ENCODE measurements at regions of chr6 and their contacts with region 1.

Region 1: GRCh38 chr6:34196126-34196830 is 40.4 kb upstream of the HMGA1 start:
- DNase-seq: peak; percentile 88
- H3K4me3 Mint-ChIP-seq: peak overlapping the region; percentile 73
- H3K27ac Mint-ChIP-seq: peak overlapping the region; percentile 78
- H3K4me1 Mint-ChIP-seq: peaks cover 10% of the 10 kb centered on the region
- H3K27me3 Mint-ChIP-seq: peaks cover 2% of the 10 kb centered on the region

Region 2: DNA sequence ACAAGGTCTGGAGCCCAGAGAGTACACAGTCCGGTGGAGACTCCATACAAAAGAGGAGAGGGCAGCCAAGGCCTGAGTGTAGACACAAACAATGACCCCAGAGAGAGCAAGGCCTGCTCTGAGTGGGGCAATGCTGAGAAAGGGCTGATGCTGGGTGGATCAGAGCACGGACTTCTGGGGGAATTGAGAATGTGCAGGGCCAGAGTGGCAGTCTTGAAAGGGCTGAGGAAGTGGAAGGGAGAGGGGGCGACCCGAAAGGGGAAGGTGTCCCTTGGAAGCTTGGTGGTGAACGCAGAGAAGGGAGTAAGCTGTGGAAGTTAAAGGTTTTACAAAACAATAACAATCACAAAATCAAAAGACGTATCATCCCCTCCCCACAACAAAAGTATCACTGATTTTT is 38.4 kb before region 1 on chr6:
- CTCF ChIA-PET with region 1: interaction called, 16 read pairs
- POLR2A ChIA-PET with region 1: no interaction called
- DNase-seq: no peak
- H3K4me3 Mint-ChIP-seq: no peak overlapping the region
- H3K27ac Mint-ChIP-seq: no peak overlapping the region
- H3K4me1 Mint-ChIP-seq: no peaks in the 10 kb centered on the region
- H3K27me3 Mint-ChIP-seq: peaks cover 28% of the 10 kb centered on the region

Region 3: DNA sequence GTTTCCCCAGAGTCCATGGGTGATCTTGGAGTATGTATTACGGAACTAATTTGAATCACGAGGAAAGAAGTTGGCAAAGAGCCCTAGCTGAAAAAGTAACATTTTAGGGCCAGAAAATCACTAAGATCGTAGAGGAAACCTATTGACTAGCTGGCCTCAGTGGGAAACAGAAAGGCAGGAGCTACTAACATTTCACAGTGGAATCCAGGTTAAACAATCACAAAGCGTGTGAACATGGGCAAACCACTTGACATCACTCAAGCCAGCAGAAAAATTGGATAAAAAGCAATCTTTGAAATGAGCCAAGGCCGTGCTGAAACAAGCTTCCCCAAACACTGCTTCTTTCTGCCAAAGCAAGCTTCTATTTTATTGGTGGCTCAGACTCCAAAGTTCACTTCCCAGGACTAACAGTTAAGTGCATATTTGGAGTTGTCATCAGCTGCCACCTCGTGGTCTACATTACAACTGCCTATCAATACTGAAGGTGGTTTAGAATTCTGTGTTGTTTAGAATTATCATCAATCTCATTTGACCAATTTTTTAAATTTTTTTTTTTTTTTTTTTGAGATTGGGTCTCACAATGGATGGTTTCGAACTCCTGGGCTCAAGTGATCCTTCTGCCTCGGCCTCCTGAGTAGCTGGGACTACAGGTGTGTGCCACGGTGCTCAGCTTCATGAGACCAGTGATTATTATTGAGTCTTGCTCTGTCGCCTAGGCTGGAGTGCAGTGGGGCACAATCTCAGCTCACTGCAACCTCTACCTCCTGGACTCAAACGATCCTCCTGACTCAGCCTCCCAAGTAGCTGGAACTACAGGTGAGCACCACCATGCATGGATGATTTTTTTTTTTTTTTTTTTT is 219.0 kb after region 1 on chr6:
- CTCF ChIA-PET with region 1: interaction called, 35 read pairs
- POLR2A ChIA-PET with region 1: no interaction called
- DNase-seq: peak; percentile 54
- H3K4me3 Mint-ChIP-seq: no peak overlapping the region
- H3K27ac Mint-ChIP-seq: peak overlapping the region; percentile 19
- H3K4me1 Mint-ChIP-seq: peaks cover 4% of the 10 kb centered on the region
- H3K27me3 Mint-ChIP-seq: no peaks in the 10 kb centered on the region